A549 (cell line): ENCODE measurements at regions of chr16 and their contacts with region 1.

Region 1: GRCh38 chr16:67883872-67884261 is 818 bp upstream of the NRN1L start:
- DNase-seq: peak; percentile 59 to 92
- ATAC-seq: peak; percentile 16 to 92; a peak in 5 of 6 replicates
- H3K4me3 ChIP-seq: no peak overlapping the region
- H3K27ac ChIP-seq: no peak overlapping the region
- H3K4me1 ChIP-seq: peaks cover 9% of the 10 kb centered on the region; the same call in 1 of the 3 replicates
- CTCF ChIP-seq: peak; percentile 79
- EP300 ChIP-seq: no peak
- POLR2A ChIP-seq: no peak
- RAD21 ChIP-seq: peak; percentile 67 to 73

Region 2: GRCh38 chr16:67672739-67673662 is 210.9 kb before region 1 on chr16:
- CTCF ChIA-PET with region 1: interaction called, 10 read pairs
- POLR2A ChIA-PET with region 1: no interaction called
- DNase-seq: peak; percentile 58 to 84
- ATAC-seq: peak; percentile 57 to 65
- H3K4me3 ChIP-seq: no peak overlapping the region
- H3K27ac ChIP-seq: no peak overlapping the region
- H3K4me1 ChIP-seq: peaks cover 3% of the 10 kb centered on the region; the same call in 1 of the 3 replicates
- CTCF ChIP-seq: peak; percentile 64
- EP300 ChIP-seq: no peak
- POLR2A ChIP-seq: no peak
- RAD21 ChIP-seq: peak; percentile 73 to 83

Region 3: GRCh38 chr16:67847064-67847861 is 36.6 kb before region 1 on chr16 and contains the start of gene CENPT:
- CTCF ChIA-PET with region 1: interaction called, 17 read pairs
- POLR2A ChIA-PET with region 1: no interaction called
- DNase-seq: peak in 1 of 2 experiments; percentile 66
- ATAC-seq: peak; percentile 64 to 72
- H3K4me3 ChIP-seq: peak within 1 kb of the TSS; percentile 93
- H3K27ac ChIP-seq: peak within 1 kb of the TSS; percentile 89 to 98
- H3K4me1 ChIP-seq: peaks cover 40% of the 10 kb centered on the region
- CTCF ChIP-seq: no peak
- EP300 ChIP-seq: no peak
- POLR2A ChIP-seq: no peak
- RAD21 ChIP-seq: no peak
- polyA plus RNA-seq, gene CENPT: 18.2 and 19.1 TPM in 2 replicates

Region 4: DNA sequence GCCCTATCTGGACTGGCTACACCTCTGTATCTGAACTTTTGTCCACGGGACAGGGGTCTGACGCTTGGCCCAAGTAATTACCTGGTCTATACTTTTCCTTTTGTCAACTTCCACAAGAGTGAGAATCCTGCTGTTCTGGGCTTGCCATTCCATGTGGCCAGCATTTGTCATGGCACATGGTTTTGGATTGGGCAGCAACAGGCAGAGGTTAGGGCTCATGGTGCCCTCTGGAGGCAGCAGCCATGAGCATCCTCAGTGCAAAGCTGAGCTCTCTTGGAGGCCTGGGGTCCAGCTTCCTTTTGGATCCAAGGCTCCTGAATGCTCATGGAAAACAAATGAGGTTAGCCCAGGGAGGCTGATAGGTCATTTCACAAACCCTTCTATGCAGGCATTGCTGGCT is 18.6 kb before region 1 on chr16:
- CTCF ChIA-PET with region 1: interaction called, 86 read pairs
- POLR2A ChIA-PET with region 1: no interaction called
- DNase-seq: peak; percentile 69 to 72
- ATAC-seq: peak; percentile 84 to 88
- H3K4me3 ChIP-seq: no peak overlapping the region
- H3K27ac ChIP-seq: no peak overlapping the region
- H3K4me1 ChIP-seq: peaks cover 36% of the 10 kb centered on the region
- CTCF ChIP-seq: peak; percentile 36
- EP300 ChIP-seq: no peak
- POLR2A ChIP-seq: no peak
- RAD21 ChIP-seq: peak; percentile 43 to 65; a peak in 4 of 5 replicates

Region 5: DNA sequence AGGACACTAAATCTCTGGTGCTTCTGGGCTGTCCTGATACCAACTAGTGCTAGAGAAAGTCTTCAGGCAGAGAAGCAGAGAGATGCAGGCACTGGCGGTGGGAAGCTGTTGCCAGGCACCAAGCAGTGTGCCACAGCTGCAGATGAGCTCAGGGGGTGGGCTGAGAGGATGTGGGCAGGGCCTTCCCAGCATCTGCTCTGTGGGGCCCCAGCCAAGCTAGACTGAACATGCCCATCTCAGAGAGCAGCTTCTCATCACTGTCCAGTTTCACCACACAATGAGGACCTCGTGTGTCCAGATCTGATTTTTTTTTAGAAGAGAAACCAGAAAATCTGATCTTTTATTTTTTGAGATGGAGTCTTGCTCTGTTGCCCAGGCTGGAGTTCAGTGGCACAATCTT is 26.3 kb after region 1 on chr16:
- CTCF ChIA-PET with region 1: interaction called, 102 read pairs
- POLR2A ChIA-PET with region 1: no interaction called
- DNase-seq: no peak
- ATAC-seq: 0 out of 6 replicates have a peak, but pooled peaks of 1 of the 2 experiments have one; percentile 24
- H3K4me3 ChIP-seq: no peak overlapping the region
- H3K27ac ChIP-seq: no peak overlapping the region
- H3K4me1 ChIP-seq: no peaks in the 10 kb centered on the region
- CTCF ChIP-seq: no peak
- EP300 ChIP-seq: no peak
- POLR2A ChIP-seq: no peak
- RAD21 ChIP-seq: no peak